ENCODE measurements at regions of chr9 and their contacts with region 1.

Region 1: DNA sequence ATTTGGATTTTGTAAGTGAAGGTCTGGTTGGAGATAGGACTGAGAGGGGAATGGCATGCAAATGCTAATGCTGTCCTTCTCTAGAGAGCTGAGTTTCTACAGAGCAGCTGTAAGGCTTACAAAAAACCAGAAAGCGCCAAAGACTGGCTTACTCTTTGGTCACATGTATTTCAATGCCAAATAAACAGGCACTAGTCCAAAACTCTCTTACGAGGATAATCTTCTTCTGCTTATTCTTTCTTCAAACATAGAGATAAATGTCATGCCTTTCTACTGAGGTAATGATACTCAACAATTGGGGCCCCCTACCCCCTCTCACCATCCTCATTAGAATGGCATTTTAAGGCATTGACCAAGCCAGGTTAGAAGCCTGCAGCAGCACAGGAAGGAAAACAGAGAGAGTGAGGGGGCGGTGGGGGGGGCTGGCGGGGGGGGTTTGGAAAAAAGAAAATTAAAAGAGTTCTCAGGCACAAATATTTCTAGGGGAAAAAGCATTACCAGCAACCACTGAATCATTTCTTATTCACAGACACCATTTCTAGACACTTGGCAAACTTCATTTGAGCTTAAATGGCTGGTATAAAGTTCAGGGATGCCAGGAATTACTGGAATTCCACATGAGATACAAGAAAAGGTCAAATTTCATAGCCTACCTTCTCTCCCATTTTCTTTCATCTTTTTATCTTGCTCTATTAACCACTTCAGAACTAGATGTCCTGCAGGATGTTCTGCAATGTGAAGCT is 34.0 kb downstream of the PUM3 start:
- DNase-seq: peak; percentile 82
- H3K4me3 ChIP-seq: no peak overlapping the region
- H3K27me3 ChIP-seq: no peaks in the 10 kb centered on the region
- CTCF ChIP-seq: no peak

Region 2: GRCh38 chr9:2234371-2234893 is 575.4 kb before region 1 on chr9:
- CTCF ChIA-PET with region 1: no interaction called
- POLR2A ChIA-PET with region 1: no interaction called
- DNase-seq: no peak
- H3K4me3 ChIP-seq: no peak overlapping the region
- H3K27me3 ChIP-seq: no peaks in the 10 kb centered on the region
- CTCF ChIP-seq: no peak

Region 3: GRCh38 chr9:2727966-2728613 is 81.8 kb before region 1 on chr9:
- CTCF ChIA-PET with region 1: no interaction called
- POLR2A ChIA-PET with region 1: no interaction called
- DNase-seq: peak; percentile 26
- H3K4me3 ChIP-seq: no peak overlapping the region
- H3K27me3 ChIP-seq: no peaks in the 10 kb centered on the region
- CTCF ChIP-seq: peak; percentile 72

Region 4: GRCh38 chr9:2764353-2764752 is 45.5 kb before region 1 on chr9:
- CTCF ChIA-PET with region 1: no interaction called
- POLR2A ChIA-PET with region 1: interaction called, 14 read pairs
- DNase-seq: no peak
- H3K4me3 ChIP-seq: no peak overlapping the region
- H3K27me3 ChIP-seq: no peaks in the 10 kb centered on the region
- CTCF ChIP-seq: no peak

Region 5: GRCh38 chr9:2791246-2791645 is 18.6 kb before region 1 on chr9:
- CTCF ChIA-PET with region 1: no interaction called
- POLR2A ChIA-PET with region 1: no interaction called
- DNase-seq: no peak
- H3K4me3 ChIP-seq: no peak overlapping the region
- H3K27me3 ChIP-seq: no peaks in the 10 kb centered on the region
- CTCF ChIP-seq: no peak

Measured in BJ (cell line).